ENCODE measurements at regions of chr5 and their contacts with region 1.

Region 1: DNA sequence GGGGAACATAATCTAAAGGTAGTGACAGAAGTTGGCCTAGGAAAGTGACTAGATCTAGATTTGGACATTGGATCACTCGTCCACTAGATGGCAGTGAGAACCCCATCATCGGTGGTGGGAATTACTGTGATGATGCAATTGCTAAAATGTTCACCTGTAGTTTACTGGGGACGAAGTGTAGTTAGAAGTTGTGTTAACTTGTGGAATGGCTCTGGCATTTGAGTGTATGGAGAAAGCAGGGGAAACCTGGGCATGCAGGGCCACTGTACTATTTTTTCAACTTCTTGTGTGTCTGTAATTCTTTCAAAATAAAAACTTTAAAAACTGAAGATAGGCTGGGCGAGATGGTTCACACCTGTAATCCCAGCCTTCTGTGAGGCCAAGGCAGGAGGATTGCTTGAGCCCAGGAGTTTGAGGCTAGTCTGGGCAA is 75.5 kb downstream of the PHAX start:
- DNase-seq: peak; percentile 79
- ATAC-seq: peak; percentile 75
- H3K4me3 ChIP-seq: no peak overlapping the region
- H3K4me3 Mint-ChIP-seq: no peak overlapping the region
- H3K27ac ChIP-seq: no peak overlapping the region
- H3K27ac Mint-ChIP-seq: no peak overlapping the region
- H3K4me1 ChIP-seq: peaks cover 0 to 4% of the 10 kb centered on the region in 2 donors
- H3K4me1 Mint-ChIP-seq: peaks cover 3% of the 10 kb centered on the region
- H3K27me3 ChIP-seq: no peaks in the 10 kb centered on the region
- H3K27me3 Mint-ChIP-seq: no peaks in the 10 kb centered on the region
- CTCF ChIP-seq: peak; percentile 87

Region 2: GRCh38 chr5:126656396-126657007 is 19.7 kb before region 1 on chr5:
- CTCF ChIA-PET with region 1: interaction called, 10 read pairs
- POLR2A ChIA-PET with region 1: no interaction called
- intact Hi-C with region 1: no loop called
- DNase-seq: peak; percentile 53
- ATAC-seq: peak; percentile 28
- H3K4me3 ChIP-seq: no peak overlapping the region
- H3K4me3 Mint-ChIP-seq: no peak overlapping the region
- H3K27ac ChIP-seq: no peak overlapping the region
- H3K27ac Mint-ChIP-seq: no peak overlapping the region
- H3K4me1 ChIP-seq: no peaks in the 10 kb centered on the region
- H3K4me1 Mint-ChIP-seq: peaks cover 5% of the 10 kb centered on the region
- H3K27me3 ChIP-seq: no peaks in the 10 kb centered on the region
- H3K27me3 Mint-ChIP-seq: peaks cover 3% of the 10 kb centered on the region
- CTCF ChIP-seq: peak; percentile 89

Region 3: DNA sequence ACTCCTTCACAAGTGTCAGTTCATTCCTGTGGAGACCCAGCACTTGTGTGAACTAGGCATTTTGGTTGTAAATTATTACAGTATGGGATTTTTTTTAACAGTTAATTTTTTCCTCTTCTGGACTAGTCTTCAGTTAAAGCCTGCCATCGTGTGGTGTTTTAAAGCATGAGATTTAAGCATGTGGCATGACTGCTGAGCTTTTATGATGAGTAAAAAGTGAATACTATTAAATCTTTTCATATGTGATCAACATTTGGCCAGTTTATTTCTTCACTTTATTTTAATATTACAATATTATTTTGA is 125.7 kb after region 1 on chr5:
- CTCF ChIA-PET with region 1: interaction called, 91 read pairs
- POLR2A ChIA-PET with region 1: no interaction called
- intact Hi-C with region 1: loop called (anchors 1 kb)
- DNase-seq: peak; percentile 48
- ATAC-seq: no peak
- H3K4me3 ChIP-seq: no peak overlapping the region
- H3K4me3 Mint-ChIP-seq: no peak overlapping the region
- H3K27ac ChIP-seq: no peak overlapping the region
- H3K27ac Mint-ChIP-seq: no peak overlapping the region
- H3K4me1 ChIP-seq: peaks cover 0 to 3% of the 10 kb centered on the region in 2 donors
- H3K4me1 Mint-ChIP-seq: peaks cover 34% of the 10 kb centered on the region
- H3K27me3 ChIP-seq: no peaks in the 10 kb centered on the region
- H3K27me3 Mint-ChIP-seq: no peaks in the 10 kb centered on the region
- CTCF ChIP-seq: peak; percentile 69

Region 4: GRCh38 chr5:126808521-126808988 is 132.3 kb after region 1 on chr5:
- CTCF ChIA-PET with region 1: interaction called, 91 read pairs
- POLR2A ChIA-PET with region 1: no interaction called
- intact Hi-C with region 1: loop called (anchors 1 kb)
- DNase-seq: peak; percentile 73
- ATAC-seq: peak; percentile 59
- H3K4me3 ChIP-seq: peak overlapping the region; percentile 8 to 61 (median 33)
- H3K4me3 Mint-ChIP-seq: peak overlapping the region; percentile 79
- H3K27ac ChIP-seq: peak overlapping the region; percentile 60 to 77
- H3K27ac Mint-ChIP-seq: peak overlapping the region; percentile 84
- H3K4me1 ChIP-seq: peaks cover 15 to 35% of the 10 kb centered on the region in 2 donors
- H3K4me1 Mint-ChIP-seq: peaks cover 55% of the 10 kb centered on the region
- H3K27me3 ChIP-seq: no peaks in the 10 kb centered on the region
- H3K27me3 Mint-ChIP-seq: no peaks in the 10 kb centered on the region
- CTCF ChIP-seq: peak; percentile 79

Region 5: DNA sequence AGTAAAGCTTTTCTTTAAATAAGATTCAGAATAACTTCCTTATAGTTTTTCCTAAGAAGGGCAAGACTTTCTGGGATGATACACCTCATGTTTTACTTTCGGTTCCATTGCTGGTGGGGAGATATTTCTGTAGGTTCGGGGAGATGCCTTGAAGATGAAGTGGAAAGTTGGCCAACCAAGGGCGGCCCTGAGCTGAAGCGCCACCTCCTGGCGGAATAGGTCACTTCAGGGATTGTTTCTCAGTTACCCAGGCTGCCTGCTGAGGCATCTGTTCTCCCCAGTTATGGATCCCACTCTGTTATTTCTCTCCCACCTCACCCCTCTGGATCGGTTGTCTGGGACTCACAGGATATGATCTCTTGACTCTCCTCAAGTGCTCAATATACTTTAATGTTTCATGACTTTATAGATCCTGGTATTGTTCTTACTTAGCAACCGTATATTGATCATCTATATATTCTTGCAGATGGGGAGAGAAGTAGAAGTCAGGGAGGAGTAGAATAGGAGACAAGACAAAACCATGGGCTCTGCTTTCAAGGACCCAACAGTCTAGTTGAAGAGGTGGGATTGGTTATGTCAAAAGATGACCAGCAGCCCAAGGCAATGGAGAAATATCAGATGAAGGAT is 637.8 kb after region 1 on chr5:
- CTCF ChIA-PET with region 1: interaction called, 24 read pairs
- POLR2A ChIA-PET with region 1: no interaction called
- intact Hi-C with region 1: loop called (anchors 1 kb)
- DNase-seq: peak; percentile 72
- ATAC-seq: peak; percentile 62
- H3K4me3 ChIP-seq: no peak overlapping the region
- H3K4me3 Mint-ChIP-seq: no peak overlapping the region
- H3K27ac ChIP-seq: no peak overlapping the region
- H3K27ac Mint-ChIP-seq: no peak overlapping the region
- H3K4me1 ChIP-seq: no peaks in the 10 kb centered on the region
- H3K4me1 Mint-ChIP-seq: peaks cover 2% of the 10 kb centered on the region
- H3K27me3 ChIP-seq: no peaks in the 10 kb centered on the region
- H3K27me3 Mint-ChIP-seq: peaks cover 16% of the 10 kb centered on the region
- CTCF ChIP-seq: peak; percentile 96

Region 6: GRCh38 chr5:127492854-127493738 is 816.9 kb after region 1 on chr5:
- CTCF ChIA-PET with region 1: interaction called, 7 read pairs
- POLR2A ChIA-PET with region 1: no interaction called
- intact Hi-C with region 1: loop called (anchors 1 kb)
- DNase-seq: peak; percentile 68
- ATAC-seq: peak; percentile 45
- H3K4me3 ChIP-seq: no peak overlapping the region
- H3K4me3 Mint-ChIP-seq: no peak overlapping the region
- H3K27ac ChIP-seq: no peak overlapping the region
- H3K27ac Mint-ChIP-seq: no peak overlapping the region
- H3K4me1 ChIP-seq: no peaks in the 10 kb centered on the region
- H3K4me1 Mint-ChIP-seq: no peaks in the 10 kb centered on the region
- H3K27me3 ChIP-seq: peaks cover 0 to 6% (median 2%) of the 10 kb centered on the region in 4 experiments
- H3K27me3 Mint-ChIP-seq: peaks cover 23% of the 10 kb centered on the region
- CTCF ChIP-seq: peak; percentile 100

Measured in B cell (primary cell).